ENCODE measurements at regions of chr16 and their contacts with region 1.

Region 1: DNA sequence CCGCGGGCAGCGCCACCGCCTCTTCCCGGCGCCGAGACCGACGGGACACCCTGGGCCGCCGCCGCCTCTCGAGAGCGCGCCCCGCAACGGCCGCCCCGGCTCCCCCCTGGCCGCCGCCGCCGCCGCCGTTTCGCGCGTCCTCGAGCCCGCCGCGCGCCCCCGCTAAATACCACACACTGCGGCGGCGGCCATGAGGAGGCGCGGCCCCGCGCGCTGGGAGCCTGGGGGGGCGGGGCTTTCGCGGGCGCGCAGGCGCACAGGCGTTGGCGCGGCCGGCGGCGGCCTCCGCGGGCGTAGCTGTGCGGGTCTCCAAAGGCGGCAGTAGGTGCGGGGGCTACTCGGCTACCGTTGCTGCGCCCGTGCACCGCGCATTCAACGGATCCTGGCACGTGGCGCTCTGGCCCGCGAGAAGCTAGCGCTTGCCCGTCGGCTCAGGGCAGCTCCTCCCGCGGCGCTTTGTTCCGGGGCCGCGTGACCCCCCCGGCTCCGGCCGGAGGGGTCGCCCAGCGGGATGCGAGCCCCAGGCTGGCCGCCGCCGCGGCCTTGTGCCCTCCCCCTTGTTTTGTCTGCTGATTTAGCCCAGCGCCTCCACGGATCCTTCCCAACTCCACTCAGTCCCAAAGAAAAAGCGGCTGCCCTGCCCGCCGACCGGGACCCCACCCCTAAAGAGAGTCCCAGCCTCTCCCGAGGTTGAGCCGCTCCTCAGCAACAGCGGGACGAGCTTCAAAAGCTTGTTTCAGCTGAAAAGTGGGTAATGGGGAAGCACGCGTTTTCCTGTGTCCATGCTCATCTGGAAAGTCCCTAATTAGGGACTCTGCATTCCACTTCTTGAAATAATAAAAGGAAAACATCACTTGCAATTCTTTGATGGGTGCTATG is at the start of gene SIAH1:
- DNase-seq: peak; percentile 91
- H3K4me3 ChIP-seq: peak within 1 kb of the TSS; percentile 75
- H3K27ac ChIP-seq: peak within 1 kb of the TSS; percentile 52
- H3K4me1 ChIP-seq: peaks cover 17% of the 10 kb centered on the region
- CTCF ChIP-seq: no peak
- total RNA-seq, gene SIAH1: 15.7 and 22.8 TPM in 2 replicates

Region 2: GRCh38 chr16:48365581-48366164 is 19.8 kb before region 1 on chr16:
- CTCF ChIA-PET with region 1: no interaction called
- POLR2A ChIA-PET with region 1: interaction called, 11 read pairs
- intact Hi-C with region 1: no loop called
- DNase-seq: no peak
- H3K4me3 ChIP-seq: peak overlapping the region; percentile 28
- H3K27ac ChIP-seq: no peak overlapping the region
- H3K4me1 ChIP-seq: peaks cover 27% of the 10 kb centered on the region
- CTCF ChIP-seq: no peak

Region 3: DNA sequence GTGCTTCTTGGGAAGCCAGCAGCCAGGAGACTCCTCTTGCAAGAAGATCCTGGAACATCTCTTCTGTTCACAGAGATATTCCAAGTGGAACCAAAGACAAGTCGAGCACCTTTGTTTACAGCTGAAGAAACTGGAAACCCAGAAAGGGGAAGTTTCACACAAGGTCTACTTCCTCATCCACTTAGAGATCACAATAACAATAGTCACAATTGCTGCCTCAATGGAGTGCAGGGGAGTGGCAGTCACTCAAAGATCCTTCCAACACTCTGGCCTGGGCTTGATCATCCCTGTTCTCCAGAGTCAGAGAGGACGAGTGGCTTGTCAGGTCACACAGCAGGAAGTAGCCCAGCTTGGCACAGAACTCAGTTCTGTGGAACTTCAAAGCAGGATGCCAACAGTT is 46.6 kb after region 1 on chr16:
- CTCF ChIA-PET with region 1: no interaction called
- POLR2A ChIA-PET with region 1: interaction called, 3 read pairs
- intact Hi-C with region 1: loop called (anchors 5 kb)
- DNase-seq: peak; percentile 84
- H3K4me3 ChIP-seq: peak overlapping the region; percentile 38
- H3K27ac ChIP-seq: peak overlapping the region; percentile 71
- H3K4me1 ChIP-seq: peaks cover 52% of the 10 kb centered on the region
- CTCF ChIP-seq: no peak

Region 4: GRCh38 chr16:49281843-49282642 is 896.5 kb after region 1 on chr16:
- CTCF ChIA-PET with region 1: no interaction called
- POLR2A ChIA-PET with region 1: no interaction called
- intact Hi-C with region 1: loop called (anchors 10 kb)
- DNase-seq: peak; percentile 97
- H3K4me3 ChIP-seq: peak overlapping the region; percentile 72
- H3K27ac ChIP-seq: peak overlapping the region; percentile 66
- H3K4me1 ChIP-seq: peaks cover 8% of the 10 kb centered on the region
- CTCF ChIP-seq: peak; percentile 63

Measured in OCI-LY7 (cell line).